Mammary epithelial cell (primary cell): ENCODE measurements at regions of chr21 and their contacts with region 1.

Region 1: GRCh38 chr21:26756491-26757159 is 88.6 kb downstream of the ADAMTS1 start:
- DNase-seq: peak; percentile 27
- H3K4me3 ChIP-seq: no peak overlapping the region
- H3K27ac ChIP-seq: no peak overlapping the region
- H3K4me1 ChIP-seq: no peaks in the 10 kb centered on the region
- H3K27me3 ChIP-seq: no peaks in the 10 kb centered on the region
- CTCF ChIP-seq: no peak

Region 2: GRCh38 chr21:26806801-26807295 is 50.2 kb after region 1 on chr21:
- CTCF ChIA-PET with region 1: no interaction called
- dilution Hi-C with region 1: loop called (anchors 5 kb)
- in situ Hi-C with region 1: no loop called
- intact Hi-C with region 1: no loop called
- DNase-seq: peak; percentile 87
- H3K4me3 ChIP-seq: no peak overlapping the region
- H3K27ac ChIP-seq: no peak overlapping the region
- H3K4me1 ChIP-seq: peaks cover 7% of the 10 kb centered on the region
- H3K27me3 ChIP-seq: no peaks in the 10 kb centered on the region
- CTCF ChIP-seq: no peak